ENCODE measurements at regions of chr19 and their contacts with region 1.

Region 1: GRCh38 chr19:46030812-46031550 is 8.1 kb upstream of the PGLYRP1 start:
- DNase-seq: peak; percentile 82
- H3K4me3 ChIP-seq: no peak overlapping the region
- H3K27ac ChIP-seq: no peak overlapping the region
- H3K4me1 ChIP-seq: peaks cover 0 to 5% (median 0%) of the 10 kb centered on the region in 4 donors
- H3K27me3 ChIP-seq: peaks cover 0 to 29% (median 4%) of the 10 kb centered on the region in 4 donors
- CTCF ChIP-seq: no peak
- EP300 ChIP-seq: no peak
- POLR2A ChIP-seq: no peak

Region 2: GRCh38 chr19:45990113-45990728 is 40.8 kb before region 1 on chr19:
- intact Hi-C with region 1: no loop called
- DNase-seq: no peak
- H3K4me3 ChIP-seq: no peak overlapping the region
- H3K27ac ChIP-seq: no peak overlapping the region
- H3K4me1 ChIP-seq: peaks cover 6 to 9% (median 6%) of the 10 kb centered on the region in 4 donors
- H3K27me3 ChIP-seq: peaks cover 0 to 24% (median 0%) of the 10 kb centered on the region in 4 donors
- CTCF ChIP-seq: no peak
- EP300 ChIP-seq: no peak
- POLR2A ChIP-seq: no peak

Region 3: DNA sequence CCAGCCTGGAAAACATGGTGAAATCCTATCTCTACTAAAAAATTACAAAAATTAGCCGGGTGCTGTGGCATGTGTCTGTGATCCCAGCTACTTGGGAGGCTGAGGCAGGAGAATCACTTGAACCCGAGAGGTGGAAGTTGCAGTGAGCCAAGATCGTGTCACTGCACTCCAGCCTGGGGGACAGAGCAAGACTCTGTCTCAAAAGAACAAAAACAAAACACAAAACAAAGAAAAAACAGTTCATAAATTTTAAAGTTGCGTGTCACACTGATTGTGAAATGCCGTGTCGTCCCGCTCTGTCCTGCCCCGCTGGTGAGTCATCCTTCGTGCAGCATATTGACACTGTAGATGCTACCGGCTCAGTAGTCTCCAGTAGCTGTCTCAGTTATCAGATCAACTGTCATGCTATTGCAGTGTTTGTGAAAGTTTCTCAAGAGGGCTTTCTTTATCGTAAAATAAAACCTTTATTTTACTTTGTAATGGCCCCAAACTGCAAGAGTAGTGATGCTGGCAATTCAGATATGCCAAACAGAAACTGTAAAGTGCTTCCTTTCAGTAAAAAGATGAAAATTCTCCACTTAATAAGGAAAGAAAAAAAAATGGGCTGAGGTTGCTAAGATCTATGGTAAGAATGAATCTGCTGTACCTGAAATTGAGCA is 162.1 kb after region 1 on chr19:
- intact Hi-C with region 1: loop called (anchors 5 kb)
- DNase-seq: no peak
- H3K4me3 ChIP-seq: no peak overlapping the region
- H3K27ac ChIP-seq: no peak overlapping the region
- H3K4me1 ChIP-seq: peaks cover 0 to 3% (median 0%) of the 10 kb centered on the region in 4 donors
- H3K27me3 ChIP-seq: peaks cover 0 to 70% (median 2%) of the 10 kb centered on the region in 4 donors
- CTCF ChIP-seq: no peak
- EP300 ChIP-seq: no peak
- POLR2A ChIP-seq: no peak

Region 4: DNA sequence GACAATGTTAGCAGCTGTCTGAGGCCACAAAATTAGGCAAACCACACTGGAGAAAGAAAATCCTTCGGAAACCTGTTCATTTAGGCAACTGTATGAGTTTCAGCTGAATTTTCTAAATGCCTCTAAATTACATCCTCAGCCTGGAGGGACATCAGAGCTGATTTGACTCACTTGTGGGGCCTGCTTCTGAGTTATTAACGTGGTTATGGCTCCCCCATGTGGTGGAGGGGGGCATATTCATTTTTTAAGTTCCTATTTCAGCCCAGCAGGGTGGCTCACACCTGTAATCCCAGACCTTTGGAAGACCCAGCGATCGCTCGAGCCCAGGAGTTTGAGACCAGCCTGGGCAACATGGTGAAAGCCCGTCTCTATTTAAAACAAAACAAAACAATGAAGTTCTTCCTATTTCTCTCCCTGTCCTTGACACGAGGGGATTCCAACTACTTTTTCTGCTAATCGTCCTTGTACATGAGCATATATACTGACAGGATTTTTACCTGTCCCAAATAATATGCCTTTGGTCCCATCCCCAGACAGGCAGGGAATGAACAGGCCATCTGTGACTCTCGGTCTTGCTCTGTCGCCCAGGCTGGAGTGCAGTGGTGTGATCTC is 234.3 kb after region 1 on chr19:
- intact Hi-C with region 1: loop called (anchors 2 kb)
- DNase-seq: peak; percentile 96
- H3K4me3 ChIP-seq: no peak overlapping the region
- H3K27ac ChIP-seq: no peak overlapping the region
- H3K4me1 ChIP-seq: no peaks in the 10 kb centered on the region
- H3K27me3 ChIP-seq: peaks cover 0 to 47% (median 0%) of the 10 kb centered on the region in 4 donors
- CTCF ChIP-seq: peak; percentile 86 to 93 (median 88)
- EP300 ChIP-seq: no peak
- POLR2A ChIP-seq: no peak